ENCODE measurements at regions of chr4 and their contacts with region 1.

Region 1: GRCh38 chr4:147590249-147590920 is 26.8 kb upstream of the TMEM184C start:
- DNase-seq: peak; percentile 59
- ATAC-seq: no peak
- H3K4me3 Mint-ChIP-seq: no peak overlapping the region
- H3K27ac Mint-ChIP-seq: no peak overlapping the region
- H3K4me1 Mint-ChIP-seq: peaks cover 21% of the 10 kb centered on the region
- H3K27me3 Mint-ChIP-seq: peaks cover 8% of the 10 kb centered on the region

Region 2: GRCh38 chr4:147160908-147161513 is 429.4 kb before region 1 on chr4:
- CTCF ChIA-PET with region 1: interaction called, 20 read pairs
- DNase-seq: no peak
- ATAC-seq: no peak
- H3K4me3 Mint-ChIP-seq: no peak overlapping the region
- H3K27ac Mint-ChIP-seq: no peak overlapping the region
- H3K4me1 Mint-ChIP-seq: peaks cover 2% of the 10 kb centered on the region
- H3K27me3 Mint-ChIP-seq: peaks cover 24% of the 10 kb centered on the region

Region 3: GRCh38 chr4:147518846-147519767 is 71.3 kb before region 1 on chr4:
- CTCF ChIA-PET with region 1: interaction called, 23 read pairs
- DNase-seq: peak; percentile 72
- ATAC-seq: peak; percentile 53
- H3K4me3 Mint-ChIP-seq: no peak overlapping the region
- H3K27ac Mint-ChIP-seq: no peak overlapping the region
- H3K4me1 Mint-ChIP-seq: no peaks in the 10 kb centered on the region
- H3K27me3 Mint-ChIP-seq: peaks cover 17% of the 10 kb centered on the region

Region 4: DNA sequence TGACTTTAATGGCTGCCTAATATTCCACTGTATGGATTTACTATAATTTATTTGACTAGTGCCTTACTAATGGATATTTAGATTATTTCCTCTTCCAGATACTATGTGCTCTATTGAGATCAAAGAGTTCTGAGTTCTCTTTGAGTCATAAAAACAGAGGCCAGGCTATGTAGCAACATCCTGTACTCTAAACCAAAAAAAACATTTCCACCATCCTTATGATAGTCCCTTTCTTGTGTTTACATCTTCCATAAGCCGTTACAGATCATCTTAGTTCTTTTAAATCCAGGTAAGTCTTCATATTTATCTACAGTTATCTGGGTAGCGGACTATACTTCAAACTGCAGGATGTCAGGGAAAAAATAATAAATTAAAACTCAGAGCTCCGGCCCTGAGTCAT is 29.7 kb before region 1 on chr4:
- CTCF ChIA-PET with region 1: no interaction called
- DNase-seq: no peak
- ATAC-seq: no peak
- H3K4me3 Mint-ChIP-seq: no peak overlapping the region
- H3K27ac Mint-ChIP-seq: no peak overlapping the region
- H3K4me1 Mint-ChIP-seq: no peaks in the 10 kb centered on the region
- H3K27me3 Mint-ChIP-seq: peaks cover 2% of the 10 kb centered on the region

Region 5: GRCh38 chr4:147714575-147715401 is 124.4 kb after region 1 on chr4:
- CTCF ChIA-PET with region 1: no interaction called
- DNase-seq: no peak
- ATAC-seq: no peak
- H3K4me3 Mint-ChIP-seq: no peak overlapping the region
- H3K27ac Mint-ChIP-seq: no peak overlapping the region
- H3K4me1 Mint-ChIP-seq: peaks cover 12% of the 10 kb centered on the region
- H3K27me3 Mint-ChIP-seq: peaks cover 24% of the 10 kb centered on the region